ENCODE measurements at regions of chr11 and their contacts with region 1.

Region 1: GRCh38 chr11:70191495-70192140 is 11.5 kb upstream of the FADD start:
- DNase-seq: no peak
- H3K4me3 ChIP-seq: no peak overlapping the region
- H3K27ac ChIP-seq: no peak overlapping the region
- H3K4me1 ChIP-seq: peaks cover 0 to 12% (median 0%) of the 10 kb centered on the region in 3 donors
- H3K27me3 ChIP-seq: peaks cover 0 to 35% (median 0%) of the 10 kb centered on the region in 4 donors
- CTCF ChIP-seq: peak in 5 of 6 experiments; percentile 77 to 93 (median 87)
- POLR2A ChIP-seq: no peak

Region 2: DNA sequence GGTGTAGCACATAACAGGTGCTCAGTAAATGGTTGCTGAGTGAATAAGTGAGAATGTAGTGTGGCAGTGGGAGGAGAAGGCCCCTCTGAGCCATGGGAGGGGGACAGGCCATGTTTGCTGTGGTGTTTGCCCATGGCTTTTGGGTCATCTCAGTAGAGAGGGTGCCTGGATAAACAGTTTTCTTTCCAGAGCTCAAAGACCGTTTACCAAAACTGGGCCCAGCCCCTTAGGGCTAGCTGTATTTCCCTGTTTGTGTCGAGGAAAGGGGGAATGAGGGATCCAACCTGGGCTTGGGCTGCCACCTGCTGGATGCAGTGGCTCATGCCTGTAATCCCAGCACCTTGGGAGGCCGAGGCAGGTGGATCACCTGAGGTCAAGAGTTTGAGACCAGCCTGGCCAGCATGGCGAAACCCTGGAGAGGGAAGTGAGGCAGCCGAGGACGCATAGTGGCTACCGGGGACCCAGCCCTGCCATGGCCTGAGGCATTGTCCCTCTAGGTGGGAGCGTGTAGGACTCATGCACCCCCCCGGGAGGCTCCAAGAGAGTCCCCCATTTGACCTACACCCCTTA is 507.8 kb before region 1 on chr11:
- intact Hi-C with region 1: loop called (anchors 5 kb)
- DNase-seq: no peak
- H3K4me3 ChIP-seq: no peak overlapping the region
- H3K27ac ChIP-seq: no peak overlapping the region
- H3K4me1 ChIP-seq: peaks cover 0 to 8% (median 0%) of the 10 kb centered on the region in 3 donors
- H3K27me3 ChIP-seq: peaks cover 0 to 22% (median 0%) of the 10 kb centered on the region in 4 donors
- CTCF ChIP-seq: peak in 5 of 6 experiments; percentile 43 to 71 (median 55)
- POLR2A ChIP-seq: no peak

Region 3: DNA sequence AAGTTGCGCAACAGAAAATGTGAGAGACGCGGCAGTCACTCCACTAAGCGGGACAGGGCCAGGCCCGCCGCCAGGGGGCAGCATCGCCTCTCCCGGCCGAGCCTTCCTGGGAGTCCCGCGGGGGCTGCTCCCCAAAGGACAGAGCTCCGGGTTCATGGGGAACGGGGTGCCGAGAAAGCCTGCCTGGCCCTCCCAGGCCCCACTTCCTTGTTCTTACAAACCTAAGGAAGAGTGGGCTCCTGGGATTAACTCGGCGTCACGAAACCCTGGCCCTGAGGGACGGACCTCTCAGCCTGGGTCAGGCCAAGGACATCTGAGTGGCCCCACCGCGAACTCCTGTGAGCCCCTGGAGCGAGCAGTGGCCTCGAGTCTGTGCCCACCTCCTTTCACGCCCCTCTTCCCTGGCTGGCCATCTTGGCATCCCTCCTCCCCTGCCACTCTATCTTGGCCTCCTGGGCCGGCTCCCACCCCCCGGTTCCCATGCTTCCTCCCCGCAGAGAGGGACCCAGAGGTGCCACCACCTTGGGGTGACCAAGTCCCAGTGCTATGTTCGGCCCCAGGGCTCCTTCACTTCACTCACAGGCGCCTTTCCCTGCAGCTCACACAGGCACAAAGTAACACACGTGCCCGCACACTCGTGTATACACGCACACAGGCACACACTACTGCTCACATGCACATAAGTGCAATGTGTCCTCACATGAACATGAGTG is 272.5 kb before region 1 on chr11:
- intact Hi-C with region 1: loop called (anchors 5 kb)
- DNase-seq: no peak
- H3K4me3 ChIP-seq: no peak overlapping the region
- H3K27ac ChIP-seq: peak overlapping the region in 2 of 4 donors; percentile 32 to 37
- H3K4me1 ChIP-seq: peaks cover 0 to 29% (median 15%) of the 10 kb centered on the region in 3 donors
- H3K27me3 ChIP-seq: peaks cover 0 to 97% (median 0%) of the 10 kb centered on the region in 4 donors
- CTCF ChIP-seq: peak; percentile 63 to 96 (median 87)
- POLR2A ChIP-seq: no peak

Region 4: GRCh38 chr11:70029115-70029830 is 162.3 kb before region 1 on chr11:
- intact Hi-C with region 1: no loop called
- DNase-seq: no peak
- H3K4me3 ChIP-seq: no peak overlapping the region
- H3K27ac ChIP-seq: no peak overlapping the region
- H3K4me1 ChIP-seq: no peaks in the 10 kb centered on the region
- H3K27me3 ChIP-seq: peaks cover 0 to 22% (median 0%) of the 10 kb centered on the region in 4 donors
- CTCF ChIP-seq: no peak
- POLR2A ChIP-seq: no peak

Region 5: DNA sequence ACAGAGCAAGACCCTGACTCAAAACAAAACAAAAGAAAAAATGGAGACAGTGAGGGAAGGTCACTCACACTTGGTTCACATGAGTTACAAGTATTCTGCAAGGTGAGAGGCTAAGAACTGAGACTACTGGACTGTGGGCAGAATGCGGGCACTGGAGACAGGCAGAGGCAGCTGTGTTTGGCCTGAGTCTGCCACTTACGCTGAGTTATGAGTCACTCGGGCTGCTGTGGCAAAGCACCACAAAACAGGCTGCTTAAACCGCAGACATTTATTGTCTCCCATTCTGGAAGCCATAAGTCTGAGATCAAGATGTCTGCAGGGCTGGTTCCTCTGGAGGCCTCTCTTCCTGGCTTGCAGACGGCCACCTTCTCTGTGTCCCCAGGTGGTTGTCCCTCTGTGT is 938.0 kb after region 1 on chr11:
- intact Hi-C with region 1: no loop called
- DNase-seq: no peak
- H3K4me3 ChIP-seq: no peak overlapping the region
- H3K27ac ChIP-seq: peak overlapping the region in 1 of 4 donors; percentile 42
- H3K4me1 ChIP-seq: peaks cover 0 to 13% (median 0%) of the 10 kb centered on the region in 3 donors
- H3K27me3 ChIP-seq: no peaks in the 10 kb centered on the region
- CTCF ChIP-seq: no peak
- POLR2A ChIP-seq: no peak

Measured in esophagus squamous epithelium (tissue), 5 donors.